ENCODE measurements at regions of chr7 and their contacts with region 1.

Region 1: DNA sequence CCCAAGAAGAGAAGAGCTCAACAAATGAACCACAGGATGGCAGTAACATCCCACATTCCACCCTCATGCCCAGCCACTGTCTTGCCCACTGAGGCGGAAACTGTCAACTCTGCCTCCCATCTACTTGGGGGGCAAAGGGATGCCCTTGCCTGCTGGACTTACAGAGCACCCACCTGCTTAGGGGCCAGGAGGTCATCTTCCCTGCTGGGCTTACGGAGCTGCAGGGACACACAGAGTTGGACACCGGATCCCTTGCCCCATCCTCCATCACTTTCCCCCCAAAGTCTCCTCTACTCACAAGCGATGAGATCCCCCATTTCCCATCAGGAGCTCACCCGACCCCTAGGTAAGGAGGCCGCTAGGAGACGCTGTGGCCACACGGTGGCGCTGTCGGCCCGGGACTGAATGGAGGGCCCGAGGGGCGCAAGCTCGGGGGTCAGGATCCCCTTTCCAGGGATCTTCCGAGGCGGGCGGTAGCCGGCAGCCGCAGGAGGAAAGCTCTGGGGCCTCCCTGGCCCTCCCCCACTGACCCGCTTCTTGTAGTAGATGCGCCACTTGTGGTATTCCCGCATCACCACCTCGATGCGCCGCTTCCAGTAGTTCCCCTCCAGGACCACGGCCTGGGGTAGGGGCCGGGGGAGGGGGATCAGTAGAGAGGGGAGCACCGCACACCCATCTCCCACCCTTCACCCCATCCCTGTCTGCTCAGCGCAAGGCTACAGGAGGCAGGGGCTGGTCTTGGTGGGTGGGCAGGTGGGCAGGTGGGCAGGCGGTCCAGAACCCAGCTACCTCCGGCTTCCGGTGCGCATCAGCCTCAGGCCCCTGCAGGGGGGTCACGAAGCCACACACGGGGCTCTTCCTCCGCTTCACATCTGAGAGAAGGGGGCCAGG is 17.3 kb downstream of the MLXIPL start:
- DNase-seq: no peak

Region 2: GRCh38 chr7:73667344-73668102 is 60.5 kb after region 1 on chr7 and contains the start of gene VPS37D:
- intact Hi-C with region 1: loop called (anchors 2 to 5 kb)
- DNase-seq: peak; percentile 97
- total RNA-seq, gene VPS37D: 1.2 to 2.0 TPM

Region 3: DNA sequence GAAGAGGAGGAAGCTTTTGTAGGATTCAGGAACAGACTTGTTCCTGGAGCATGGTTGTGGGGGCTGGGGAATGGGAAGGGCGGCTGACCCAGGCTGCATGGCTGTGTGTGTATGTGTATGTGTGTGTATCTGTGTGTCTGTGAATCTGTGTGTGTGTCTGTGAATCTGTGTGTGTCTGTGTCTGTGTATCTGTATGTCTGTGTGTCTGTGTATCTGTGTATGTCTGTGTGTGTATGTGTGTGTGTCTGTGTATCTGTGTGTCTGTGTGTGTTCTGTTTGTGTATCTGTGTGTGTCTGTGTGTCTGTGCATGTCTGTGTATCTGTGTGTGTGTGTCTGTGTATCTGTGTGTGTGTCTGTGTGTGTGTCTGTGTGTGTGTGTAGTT is 119.0 kb after region 1 on chr7:
- intact Hi-C with region 1: loop called (anchors 5 kb)
- DNase-seq: no peak

Region 4: DNA sequence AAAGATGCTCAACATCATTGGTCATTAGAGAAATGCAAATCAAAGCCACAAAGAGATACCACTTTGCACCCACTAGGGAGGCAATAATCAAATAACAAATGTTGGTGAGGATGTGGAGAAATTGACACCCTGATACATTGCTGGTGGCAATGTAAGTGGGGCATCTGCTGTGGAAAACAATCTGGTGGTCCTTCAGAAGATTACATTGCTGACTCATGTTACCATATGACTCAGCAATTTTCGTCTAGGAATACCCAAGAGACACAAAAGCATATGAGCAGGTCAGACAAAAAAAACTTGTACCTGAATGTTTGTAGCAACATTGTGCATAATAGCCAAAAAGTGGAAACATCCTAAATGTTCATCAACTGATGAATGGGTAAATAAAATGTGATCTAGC is 167.9 kb after region 1 on chr7:
- intact Hi-C with region 1: no loop called
- DNase-seq: no peak

Region 5: DNA sequence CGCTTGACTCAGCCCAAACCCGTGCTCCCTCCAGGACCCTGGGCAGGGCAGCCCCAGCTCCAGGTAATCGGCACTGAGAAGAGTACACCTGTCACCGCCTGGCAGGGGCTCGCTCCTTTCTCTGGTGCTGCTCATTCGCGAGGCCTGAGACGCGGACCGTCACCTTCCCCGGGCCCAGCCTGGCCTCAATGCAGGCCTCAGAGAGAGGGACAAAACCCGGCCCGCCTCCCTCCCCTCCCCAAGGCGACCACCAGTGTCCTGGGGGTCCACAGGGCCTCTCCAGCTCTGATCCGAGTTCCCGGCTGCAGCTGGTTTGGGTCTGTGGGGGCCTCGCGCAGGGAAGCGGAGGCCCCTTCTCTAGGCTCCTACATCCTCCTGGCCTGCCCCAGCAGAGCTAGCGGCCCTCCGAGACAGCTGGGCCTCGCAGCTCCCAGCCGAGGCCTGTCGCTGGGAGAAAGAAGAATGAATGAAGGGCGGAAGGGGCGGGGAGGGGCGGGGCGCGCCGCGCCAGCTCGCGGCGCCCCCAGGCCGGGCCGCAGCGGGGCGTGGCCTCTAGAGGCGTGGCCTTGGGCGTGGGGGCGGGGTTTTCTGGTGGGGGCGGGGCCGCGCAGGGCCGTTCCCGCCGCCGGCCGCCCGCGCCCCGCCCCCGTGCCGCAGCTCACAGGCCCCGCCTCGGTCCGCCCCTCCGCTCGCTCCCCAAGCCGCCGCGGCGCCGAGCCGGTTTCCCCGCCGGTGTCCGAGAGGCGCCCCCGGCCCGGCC is 476.3 kb after region 1 on chr7 and contains the start of gene LIMK1:
- intact Hi-C with region 1: no loop called
- DNase-seq: peak; percentile 93
- total RNA-seq, gene LIMK1: 19.4 to 22.3 TPM